GM10248 (cell line): ENCODE measurements at regions of chr16 and their contacts with region 1.

Region 1: GRCh38 chr16:29815793-29816693 is at the start of gene PAGR1:
- DNase-seq: peak; percentile 96
- CTCF ChIP-seq: peak; percentile 97

Region 2: GRCh38 chr16:29675811-29676643 is 140.0 kb before region 1 on chr16:
- CTCF ChIA-PET with region 1: no interaction called
- POLR2A ChIA-PET with region 1: no interaction called
- DNase-seq: no peak
- CTCF ChIP-seq: no peak

Region 3: DNA sequence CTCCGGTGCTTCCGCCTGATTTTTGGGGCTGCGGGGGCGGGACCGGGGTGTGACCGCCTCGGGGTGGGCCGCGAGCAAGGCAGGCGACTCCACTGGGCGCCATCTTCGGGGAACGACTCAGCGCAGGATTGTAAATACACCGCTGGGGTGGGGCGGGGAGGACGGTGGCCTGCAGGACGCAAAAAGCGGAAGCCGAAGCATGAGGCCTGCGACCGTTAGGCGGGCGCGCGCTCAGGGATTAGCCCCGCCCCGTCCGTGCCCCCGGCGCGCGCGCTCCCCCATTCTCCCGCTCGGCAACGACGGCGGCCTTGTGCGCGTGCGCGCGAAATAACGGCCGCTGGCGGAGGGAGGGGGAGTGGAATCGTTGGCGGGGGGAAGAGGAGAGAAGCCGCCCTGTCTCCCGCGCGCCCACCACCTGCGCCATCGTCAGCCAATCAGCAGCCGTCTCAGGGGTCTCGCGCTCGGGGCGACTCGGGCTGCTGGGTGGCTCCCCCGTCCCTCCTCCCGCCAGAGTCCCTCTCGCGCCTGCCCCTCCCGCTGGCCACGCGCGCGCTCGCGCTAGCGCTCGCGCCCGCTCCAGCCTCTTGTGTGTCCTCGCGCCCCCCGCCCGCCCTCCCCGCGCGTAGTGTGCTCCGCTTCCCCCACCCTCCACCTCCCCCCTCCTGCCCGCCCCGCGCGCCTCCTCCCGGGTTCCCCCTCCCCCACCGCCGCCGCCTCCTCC is 10.5 kb before region 1 on chr16:
- CTCF ChIA-PET with region 1: interaction called, 39 read pairs
- POLR2A ChIA-PET with region 1: interaction called, 8 read pairs
- DNase-seq: peak; percentile 94
- CTCF ChIP-seq: no peak